Common myeloid progenitor, CD34-positive (primary cell): ENCODE measurements at regions of chr13 and their contacts with region 1.

Region 1: GRCh38 chr13:27826379-27827353 is 34.4 kb downstream of the GSX1 start:
- DNase-seq: peak; percentile 80 to 84 (median 83)
- H3K4me3 ChIP-seq: peak overlapping the region in 6 of 7 experiments; percentile 20 to 71 (median 46)
- H3K27ac ChIP-seq: no peak overlapping the region
- H3K4me1 ChIP-seq: peaks cover 0 to 13% (median 5%) of the 10 kb centered on the region in 4 experiments
- H3K27me3 ChIP-seq: peaks cover 8 to 78% (median 43%) of the 10 kb centered on the region in 5 experiments

Region 2: DNA sequence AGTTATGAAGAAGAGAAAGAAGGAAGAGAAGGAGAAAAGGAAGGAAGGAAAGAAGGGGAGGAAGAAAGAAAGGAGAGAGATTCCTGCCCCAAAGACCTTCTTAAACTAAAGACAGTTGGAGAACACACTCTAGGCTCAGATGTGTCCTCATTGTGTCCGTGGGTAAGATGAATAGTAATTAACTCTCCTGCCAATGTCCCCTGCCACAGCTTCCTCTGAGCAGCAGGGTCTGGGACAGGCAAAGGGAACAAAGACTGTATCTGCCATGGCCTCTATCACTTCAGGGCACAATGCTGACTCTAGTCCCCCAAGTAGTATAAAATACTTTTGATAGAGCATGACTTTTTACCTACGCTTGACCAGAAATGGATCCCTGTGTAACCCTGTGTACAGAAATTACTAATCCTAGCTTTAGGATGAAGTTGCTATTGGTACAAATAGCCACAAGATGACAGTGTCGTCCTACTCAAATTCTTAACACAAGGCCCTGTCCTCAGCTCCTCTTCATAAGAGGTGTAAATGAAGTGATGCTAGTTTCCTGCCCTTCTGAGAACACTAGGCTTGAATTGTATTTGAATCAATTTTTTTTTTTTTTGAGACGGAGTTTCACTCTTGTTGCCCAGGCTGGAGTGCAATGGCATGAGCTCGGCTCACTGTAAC is 879.9 kb before region 1 on chr13:
- CTCF ChIA-PET with region 1: interaction called, 14 read pairs
- POLR2A ChIA-PET with region 1: no interaction called
- DNase-seq: peak; percentile 70 to 83 (median 80)
- H3K4me3 ChIP-seq: no peak overlapping the region
- H3K27ac ChIP-seq: no peak overlapping the region
- H3K4me1 ChIP-seq: peaks cover 0 to 7% (median 2%) of the 10 kb centered on the region in 4 experiments
- H3K27me3 ChIP-seq: no peaks in the 10 kb centered on the region

Region 3: DNA sequence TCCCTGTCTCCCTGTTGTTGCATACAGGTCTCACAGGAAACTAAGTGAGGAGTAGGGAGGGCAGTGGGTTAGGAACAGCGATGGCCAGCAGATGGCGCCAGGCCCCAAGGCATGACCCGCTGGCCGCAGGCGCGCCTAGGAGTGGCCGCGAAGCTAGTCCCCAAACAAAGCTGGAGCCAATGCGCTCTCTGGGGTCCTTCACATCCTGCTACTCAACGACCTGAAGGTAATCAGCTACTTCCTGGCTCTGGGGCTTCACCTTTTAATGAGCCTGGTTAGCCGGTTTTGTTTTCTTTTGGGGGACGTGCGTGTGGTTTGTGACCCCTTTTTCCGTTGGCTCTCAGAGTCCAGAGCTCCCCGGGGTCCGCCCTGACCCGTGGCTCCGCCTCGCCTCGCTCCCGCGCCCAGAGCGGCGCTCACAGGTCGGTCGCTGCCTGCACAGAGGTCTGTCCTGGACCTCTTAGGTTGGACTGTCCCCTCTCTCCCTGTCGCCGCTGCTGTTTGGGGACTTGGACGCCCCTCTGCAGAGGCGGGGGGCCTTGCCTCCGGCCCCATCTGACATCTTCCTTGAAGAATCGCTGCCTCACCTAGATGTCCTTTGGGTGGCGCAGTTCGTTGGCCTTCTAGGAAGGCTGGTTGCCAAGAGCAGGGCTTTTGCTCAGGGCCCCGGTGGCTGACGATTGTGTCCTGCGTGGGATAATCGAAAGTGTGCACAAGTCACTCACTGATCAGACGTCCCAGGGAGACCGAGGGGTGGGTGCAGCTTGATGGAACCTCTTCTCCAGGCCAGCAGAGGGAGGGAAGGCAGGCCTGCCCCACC is 464.4 kb before region 1 on chr13:
- CTCF ChIA-PET with region 1: interaction called, 145 read pairs
- POLR2A ChIA-PET with region 1: no interaction called
- DNase-seq: peak; percentile 80 to 88 (median 84)
- H3K4me3 ChIP-seq: peak overlapping the region; percentile 24 to 87 (median 63)
- H3K27ac ChIP-seq: no peak overlapping the region
- H3K4me1 ChIP-seq: peaks cover 0 to 15% (median 10%) of the 10 kb centered on the region in 4 experiments
- H3K27me3 ChIP-seq: peaks cover 0 to 19% (median 4%) of the 10 kb centered on the region in 5 experiments

Region 4: GRCh38 chr13:27379694-27380641 is 446.7 kb before region 1 on chr13:
- CTCF ChIA-PET with region 1: interaction called, 126 read pairs
- POLR2A ChIA-PET with region 1: no interaction called
- DNase-seq: peak; percentile 69 to 82 (median 80)
- H3K4me3 ChIP-seq: peak overlapping the region in 2 of 7 experiments; percentile 37 to 42
- H3K27ac ChIP-seq: no peak overlapping the region
- H3K4me1 ChIP-seq: peaks cover 0 to 11% (median 7%) of the 10 kb centered on the region in 4 experiments
- H3K27me3 ChIP-seq: no peaks in the 10 kb centered on the region

Region 5: GRCh38 chr13:27808851-27809550 is 17.7 kb before region 1 on chr13:
- CTCF ChIA-PET with region 1: interaction called, 27 read pairs
- POLR2A ChIA-PET with region 1: no interaction called
- DNase-seq: no peak
- H3K4me3 ChIP-seq: no peak overlapping the region
- H3K27ac ChIP-seq: no peak overlapping the region
- H3K4me1 ChIP-seq: no peaks in the 10 kb centered on the region
- H3K27me3 ChIP-seq: peaks cover 16 to 75% (median 31%) of the 10 kb centered on the region in 5 experiments

Region 6: DNA sequence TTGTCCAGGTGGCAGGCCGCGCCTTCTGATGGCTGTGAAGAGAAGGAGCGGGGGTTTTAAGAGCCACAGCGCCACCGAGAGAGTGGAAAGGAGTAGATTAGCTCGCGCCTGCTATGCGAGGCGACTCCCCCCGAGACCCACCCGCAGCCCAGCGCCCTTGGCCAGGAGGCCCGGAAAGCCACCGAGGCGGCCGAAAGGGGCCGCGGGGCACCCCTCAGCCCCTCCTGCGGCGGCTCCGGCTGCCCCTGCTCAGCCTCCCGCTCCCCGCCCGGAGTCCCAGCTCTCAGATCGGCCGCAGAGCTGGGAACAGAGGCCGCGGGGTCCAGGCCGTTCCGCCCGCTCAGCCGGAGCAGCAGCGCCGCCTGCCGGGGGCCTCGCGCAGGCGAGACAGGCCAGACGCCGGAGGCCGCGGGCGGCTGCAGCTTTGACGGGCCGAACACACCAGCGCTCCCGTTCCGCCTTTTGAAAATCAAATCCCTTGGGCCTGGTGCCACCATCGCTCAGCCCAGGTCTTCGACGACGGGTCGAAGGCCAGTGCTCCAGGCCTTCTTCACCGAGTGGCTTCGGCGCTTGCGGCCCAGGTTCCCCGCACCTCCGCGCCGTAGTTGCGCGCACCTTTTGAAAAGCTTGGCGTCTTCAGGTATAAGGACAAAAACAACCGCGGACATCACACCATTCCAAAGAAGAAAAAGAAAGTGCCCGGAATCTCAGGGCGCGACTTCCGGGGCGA is 127.2 kb after region 1 on chr13:
- CTCF ChIA-PET with region 1: interaction called, 65 read pairs
- POLR2A ChIA-PET with region 1: no interaction called
- DNase-seq: peak; percentile 68 to 83 (median 81)
- H3K4me3 ChIP-seq: peak overlapping the region; percentile 19 to 58 (median 47)
- H3K27ac ChIP-seq: no peak overlapping the region
- H3K4me1 ChIP-seq: peaks cover 0 to 20% (median 19%) of the 10 kb centered on the region in 4 experiments
- H3K27me3 ChIP-seq: peaks cover 14 to 97% (median 55%) of the 10 kb centered on the region in 5 experiments

Region 7: GRCh38 chr13:27968316-27969081 is 141.8 kb after region 1 on chr13:
- CTCF ChIA-PET with region 1: interaction called, 12 read pairs
- POLR2A ChIA-PET with region 1: no interaction called
- DNase-seq: peak in 2 of 3 donors; percentile 60 to 68
- H3K4me3 ChIP-seq: peak overlapping the region in 5 of 7 experiments; percentile 7 to 62 (median 54)
- H3K27ac ChIP-seq: no peak overlapping the region
- H3K4me1 ChIP-seq: peaks cover 0 to 37% (median 27%) of the 10 kb centered on the region in 4 experiments
- H3K27me3 ChIP-seq: peaks cover 10 to 100% (median 66%) of the 10 kb centered on the region in 5 experiments

Region 8: GRCh38 chr13:28528861-28529260 is 702.2 kb after region 1 on chr13:
- CTCF ChIA-PET with region 1: no interaction called
- POLR2A ChIA-PET with region 1: no interaction called
- DNase-seq: no peak
- H3K4me3 ChIP-seq: no peak overlapping the region
- H3K27ac ChIP-seq: no peak overlapping the region
- H3K4me1 ChIP-seq: peaks cover 13 to 64% (median 43%) of the 10 kb centered on the region in 4 experiments
- H3K27me3 ChIP-seq: peaks cover 0 to 40% (median 11%) of the 10 kb centered on the region in 5 experiments